Stomach (tissue), 19 donors: ENCODE measurements at regions of chr18 and their contacts with region 1.

Region 1: DNA sequence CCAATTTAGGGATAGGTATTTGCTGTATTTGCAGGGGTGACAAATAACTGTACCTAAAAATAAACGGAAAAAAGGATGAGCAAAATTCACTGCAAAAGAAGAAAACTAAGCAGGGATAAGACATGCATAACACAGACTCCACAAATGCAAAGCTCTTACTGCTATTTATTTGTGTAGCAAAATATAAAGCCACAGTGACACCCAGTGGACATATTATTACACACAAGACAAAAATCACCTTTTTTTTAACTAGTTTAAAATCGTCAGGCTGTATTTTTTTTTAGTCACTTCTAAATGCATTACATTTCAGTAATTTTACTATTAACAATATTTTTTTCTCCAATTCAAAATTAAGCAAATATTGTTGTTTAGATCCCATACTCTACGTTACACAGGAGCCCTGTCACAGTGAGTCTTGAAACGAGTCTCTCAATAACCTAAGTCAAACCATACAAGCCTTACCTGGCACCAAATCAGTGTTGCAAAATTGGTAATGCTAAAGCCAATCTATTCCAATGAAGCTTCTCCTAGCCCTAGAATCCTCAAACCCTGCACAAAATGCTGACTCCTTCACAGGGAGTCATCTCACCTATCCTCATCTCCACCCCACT is 23.7 kb downstream of the METTL4 start:
- DNase-seq: peak in 1 of 2 donors; percentile 81
- H3K4me3 ChIP-seq: no peak overlapping the region
- H3K27ac ChIP-seq: no peak overlapping the region
- H3K4me1 ChIP-seq: peaks cover 0 to 7% (median 0%) of the 10 kb centered on the region in 4 donors
- H3K27me3 ChIP-seq: no peaks in the 10 kb centered on the region
- CTCF ChIP-seq: peak in 4 of 7 experiments; percentile 38 to 66 (median 40)
- EP300 ChIP-seq: no peak
- POLR2A ChIP-seq: no peak

Region 2: DNA sequence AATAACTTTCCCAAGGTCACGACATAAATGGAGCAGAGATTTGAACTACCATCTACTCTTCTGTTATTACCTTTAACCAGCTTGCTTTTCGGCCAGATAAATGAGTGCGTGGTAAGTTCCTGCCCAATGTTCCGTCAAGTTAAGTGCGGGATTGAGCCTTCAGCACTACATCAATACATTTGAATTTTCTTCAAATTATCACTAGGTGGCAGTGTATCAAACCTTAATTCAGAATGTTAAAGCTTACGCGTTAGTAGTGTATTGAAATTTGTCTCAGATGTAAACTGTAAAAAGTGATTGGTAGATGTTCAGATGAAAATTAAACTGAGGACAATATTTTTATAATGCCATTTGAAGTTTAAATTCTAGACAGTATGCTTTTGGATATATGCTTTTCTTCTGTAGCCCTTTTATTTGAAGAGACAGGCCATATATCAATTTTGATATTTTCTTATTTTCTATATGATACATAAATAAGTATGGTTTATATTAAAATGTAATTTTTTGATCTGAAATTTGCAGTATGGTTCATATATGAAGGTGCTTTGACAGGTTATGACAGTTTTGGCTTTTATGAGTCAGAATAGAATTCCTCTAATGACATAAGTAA is 961.6 kb before region 1 on chr18:
- intact Hi-C with region 1: loop called (anchors 10 kb)
- DNase-seq: peak in 1 of 2 donors; percentile 57
- H3K4me3 ChIP-seq: no peak overlapping the region
- H3K27ac ChIP-seq: no peak overlapping the region
- H3K4me1 ChIP-seq: no peaks in the 10 kb centered on the region
- H3K27me3 ChIP-seq: peaks cover 0 to 6% (median 0%) of the 10 kb centered on the region in 3 donors
- CTCF ChIP-seq: peak in 2 of 7 experiments; percentile 22 to 23
- EP300 ChIP-seq: no peak
- POLR2A ChIP-seq: no peak

Region 3: GRCh38 chr18:2459886-2460285 is 87.7 kb before region 1 on chr18:
- intact Hi-C with region 1: no loop called
- DNase-seq: no peak
- H3K4me3 ChIP-seq: no peak overlapping the region
- H3K27ac ChIP-seq: no peak overlapping the region
- H3K4me1 ChIP-seq: no peaks in the 10 kb centered on the region
- H3K27me3 ChIP-seq: no peaks in the 10 kb centered on the region
- CTCF ChIP-seq: no peak
- EP300 ChIP-seq: no peak
- POLR2A ChIP-seq: no peak